HEK293 (cell line): ENCODE measurements at regions of chr6 and their contacts with region 1.

Region 1: GRCh38 chr6:3977875-3978711 is 100.8 kb downstream of the FAM217A start:
- H3K4me3 ChIP-seq: no peak overlapping the region
- H3K27ac ChIP-seq: no peak overlapping the region
- H3K4me1 ChIP-seq: no peaks in the 10 kb centered on the region
- CTCF ChIP-seq: peak; percentile 89

Region 2: DNA sequence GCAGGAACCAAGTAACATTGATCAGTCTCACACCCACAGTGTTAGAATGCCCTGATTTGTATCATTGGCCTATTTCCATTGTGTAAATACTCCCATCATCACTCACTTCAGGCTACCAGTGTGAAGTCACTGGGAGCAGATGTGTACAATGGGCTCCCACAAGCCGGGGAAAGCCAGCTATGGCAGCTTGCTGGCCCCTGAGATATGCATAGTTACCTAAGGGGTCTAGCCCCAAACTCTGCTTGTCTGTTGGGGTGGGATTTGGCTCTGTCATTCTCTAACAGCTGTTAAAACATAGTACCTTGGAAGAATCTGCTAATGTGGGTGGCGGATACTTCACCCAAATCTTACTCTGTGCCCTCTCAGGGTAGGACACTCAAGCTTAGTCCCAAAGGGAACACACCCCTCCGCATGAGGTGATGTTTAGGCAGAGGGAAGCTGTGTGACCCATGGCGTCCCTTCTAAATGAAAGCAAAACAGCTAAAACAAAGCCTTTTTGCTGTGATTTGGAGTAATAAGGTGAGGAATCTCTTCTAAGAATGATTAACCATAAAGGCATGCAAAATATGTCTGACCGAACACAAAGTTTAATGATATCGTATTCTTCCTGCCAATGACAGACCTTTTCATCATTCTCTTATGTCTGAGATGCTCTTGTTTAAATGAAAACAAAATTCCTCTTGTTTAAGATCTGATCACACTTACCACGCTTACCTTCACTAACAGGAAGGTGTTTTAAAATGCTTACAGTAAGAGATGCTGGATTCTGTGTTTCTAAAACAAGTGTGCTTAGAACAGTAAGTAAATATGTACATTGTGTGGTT is 180.7 kb before region 1 on chr6:
- CTCF ChIA-PET with region 1: interaction called, 13 read pairs
- POLR2A ChIA-PET with region 1: no interaction called
- H3K4me3 ChIP-seq: no peak overlapping the region
- H3K27ac ChIP-seq: no peak overlapping the region
- H3K4me1 ChIP-seq: peaks cover 4% of the 10 kb centered on the region; the same call in 1 of the 2 replicates
- CTCF ChIP-seq: no peak

Region 3: GRCh38 chr6:3848925-3849605 is 129.0 kb before region 1 on chr6 and contains the start of gene FAM50B:
- CTCF ChIA-PET with region 1: interaction called, 91 read pairs
- POLR2A ChIA-PET with region 1: interaction called, 6 read pairs
- H3K4me3 ChIP-seq: peak within 1 kb of the TSS; percentile 52
- H3K27ac ChIP-seq: peak within 1 kb of the TSS; percentile 37; the same call in 1 of the 2 replicates
- H3K4me1 ChIP-seq: no peaks in the 10 kb centered on the region
- CTCF ChIP-seq: no peak

Region 4: DNA sequence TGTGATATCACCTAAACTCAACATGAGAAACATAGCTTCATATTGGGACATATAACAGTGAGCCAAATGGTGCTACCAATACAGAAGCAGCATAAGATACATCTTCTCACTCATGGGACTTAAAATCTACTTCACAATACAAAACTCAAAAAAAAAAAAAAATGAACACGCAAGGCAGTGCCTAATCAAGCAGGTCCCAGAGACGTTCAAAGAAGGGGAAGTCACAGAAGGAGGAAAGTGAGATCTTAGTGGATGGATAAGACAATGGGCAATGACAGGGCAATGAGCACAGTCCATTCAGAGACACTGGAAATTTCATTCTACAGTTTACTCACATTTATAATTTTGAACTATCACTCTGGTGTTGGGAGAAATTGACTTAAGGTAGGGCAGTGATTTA is 40.7 kb before region 1 on chr6:
- CTCF ChIA-PET with region 1: interaction called, 38 read pairs
- POLR2A ChIA-PET with region 1: no interaction called
- H3K4me3 ChIP-seq: no peak overlapping the region
- H3K27ac ChIP-seq: no peak overlapping the region
- H3K4me1 ChIP-seq: no peaks in the 10 kb centered on the region
- CTCF ChIP-seq: no peak

Region 5: GRCh38 chr6:3962957-3963303 is 15.2 kb before region 1 on chr6:
- CTCF ChIA-PET with region 1: interaction called, 60 read pairs
- POLR2A ChIA-PET with region 1: no interaction called
- H3K4me3 ChIP-seq: no peak overlapping the region
- H3K27ac ChIP-seq: no peak overlapping the region
- H3K4me1 ChIP-seq: peaks cover 10% of the 10 kb centered on the region
- CTCF ChIP-seq: no peak

Region 6: GRCh38 chr6:4055420-4056041 is 77.4 kb after region 1 on chr6:
- CTCF ChIA-PET with region 1: no interaction called
- POLR2A ChIA-PET with region 1: no interaction called
- H3K4me3 ChIP-seq: no peak overlapping the region
- H3K27ac ChIP-seq: no peak overlapping the region
- H3K4me1 ChIP-seq: peaks cover 7% of the 10 kb centered on the region; the same call in 1 of the 2 replicates
- CTCF ChIP-seq: 0 out of 2 replicates have a peak, but pooled peaks have one; percentile 39

Region 7: GRCh38 chr6:5036269-5036668 is 1058.2 kb after region 1 on chr6:
- CTCF ChIA-PET with region 1: no interaction called
- POLR2A ChIA-PET with region 1: no interaction called
- H3K4me3 ChIP-seq: no peak overlapping the region
- H3K27ac ChIP-seq: no peak overlapping the region
- H3K4me1 ChIP-seq: no peaks in the 10 kb centered on the region
- CTCF ChIP-seq: no peak